ENCODE measurements at regions of chr6 and their contacts with region 1.

Region 1: DNA sequence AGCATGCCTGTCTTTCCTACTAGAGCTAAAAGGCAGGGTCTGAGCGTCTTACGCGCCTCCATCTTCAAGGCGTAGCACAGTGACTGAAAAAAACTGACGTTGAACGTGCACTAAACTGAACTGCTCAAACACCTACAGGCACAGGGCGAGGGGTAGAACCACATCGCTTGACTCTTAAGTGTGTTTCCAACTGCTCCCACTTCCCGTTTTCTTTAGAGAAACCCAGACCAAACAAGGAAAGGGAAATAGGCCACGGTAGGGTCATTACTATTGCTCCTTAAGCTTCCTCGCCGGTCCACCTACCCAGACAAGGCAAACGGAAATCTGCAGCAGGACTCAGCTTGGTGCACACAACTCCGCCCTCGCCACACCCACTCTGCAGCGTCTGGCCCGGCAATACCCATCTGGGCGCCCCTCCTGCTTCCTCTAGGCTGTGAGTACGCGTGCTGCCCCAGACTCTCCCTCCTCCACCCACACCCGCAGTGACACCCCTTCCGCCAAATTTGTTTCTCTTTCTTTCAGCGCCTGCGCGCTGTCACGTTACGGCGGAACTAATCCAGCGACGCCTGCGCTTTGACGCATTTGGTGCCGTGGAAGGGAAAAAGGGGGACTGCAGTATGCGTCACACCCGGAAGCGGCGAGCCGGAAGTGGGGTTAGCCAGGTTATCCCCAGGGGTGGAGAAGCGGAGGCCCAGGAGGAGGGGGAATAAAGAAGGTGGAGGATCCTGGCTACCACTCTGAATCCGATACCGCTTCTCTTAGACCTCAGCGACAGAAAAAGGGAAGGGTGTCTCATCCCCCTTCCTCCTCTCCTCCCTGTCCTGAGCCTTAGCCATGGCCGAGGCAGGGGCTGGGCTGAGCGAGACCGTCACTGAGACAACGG is at the start of gene PPP1R11:
- DNase-seq: peak; percentile 98 to 100 (median 99)

Region 2: DNA sequence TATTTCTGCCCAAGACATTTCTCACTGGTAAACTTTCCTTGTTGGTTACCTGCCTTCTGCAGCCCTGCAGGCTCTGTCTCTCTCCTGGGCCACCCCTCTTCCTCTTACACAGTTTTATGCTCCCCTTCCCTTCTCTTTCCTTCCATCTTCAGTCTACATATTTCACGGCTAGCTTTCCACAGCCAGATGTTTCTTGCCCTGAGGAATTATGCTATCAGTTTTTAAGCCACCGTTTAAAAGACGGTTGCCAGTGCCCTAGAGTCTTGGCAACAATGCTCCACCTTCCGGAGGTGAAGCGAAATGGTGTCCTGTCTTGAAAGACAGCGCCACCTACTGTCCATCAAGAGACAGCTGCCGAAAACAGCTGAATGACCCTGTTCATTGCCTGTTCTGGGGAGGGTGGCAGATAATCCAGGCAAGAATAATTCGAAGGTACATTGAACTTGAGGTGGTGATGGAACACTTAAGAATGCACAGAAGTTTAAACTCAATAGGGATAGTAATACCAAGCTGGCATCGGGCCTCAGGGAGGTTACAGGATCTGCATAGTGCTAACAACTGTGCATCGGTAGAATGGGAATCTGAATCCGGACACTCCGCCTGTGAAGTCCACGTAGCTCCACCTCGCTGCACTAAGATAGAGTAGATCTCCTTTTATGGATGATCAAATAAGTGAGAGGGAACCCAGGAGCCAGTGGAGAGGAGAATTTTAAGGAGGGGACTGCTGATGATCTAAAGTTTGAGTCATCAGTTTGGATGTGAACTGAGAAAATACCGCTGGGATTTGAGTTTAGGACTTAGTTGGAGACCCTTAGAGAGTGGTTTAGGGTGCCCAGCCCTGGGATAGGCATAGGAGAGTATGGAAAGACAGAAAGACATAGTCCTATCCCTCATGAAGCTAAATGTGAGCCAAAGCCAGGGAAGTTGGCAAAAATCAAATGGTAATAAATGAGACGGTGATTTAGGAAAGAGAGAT is 64.4 kb after region 1 on chr6:
- intact Hi-C with region 1: loop called (anchors 2 kb)
- DNase-seq: peak in 6 of 10 donors; percentile 30 to 91 (median 48)

Region 3: GRCh38 chr6:30556066-30556905 is 489.5 kb after region 1 on chr6 and contains the start of gene GNL1:
- intact Hi-C with region 1: no loop called
- DNase-seq: peak; percentile 80 to 98 (median 90)